Activated B cell treated with CpG ODN at 0.5 μM for 24 hours (primary cell): ENCODE measurements at regions of chr7 and their contacts with region 1.

Region 1: DNA sequence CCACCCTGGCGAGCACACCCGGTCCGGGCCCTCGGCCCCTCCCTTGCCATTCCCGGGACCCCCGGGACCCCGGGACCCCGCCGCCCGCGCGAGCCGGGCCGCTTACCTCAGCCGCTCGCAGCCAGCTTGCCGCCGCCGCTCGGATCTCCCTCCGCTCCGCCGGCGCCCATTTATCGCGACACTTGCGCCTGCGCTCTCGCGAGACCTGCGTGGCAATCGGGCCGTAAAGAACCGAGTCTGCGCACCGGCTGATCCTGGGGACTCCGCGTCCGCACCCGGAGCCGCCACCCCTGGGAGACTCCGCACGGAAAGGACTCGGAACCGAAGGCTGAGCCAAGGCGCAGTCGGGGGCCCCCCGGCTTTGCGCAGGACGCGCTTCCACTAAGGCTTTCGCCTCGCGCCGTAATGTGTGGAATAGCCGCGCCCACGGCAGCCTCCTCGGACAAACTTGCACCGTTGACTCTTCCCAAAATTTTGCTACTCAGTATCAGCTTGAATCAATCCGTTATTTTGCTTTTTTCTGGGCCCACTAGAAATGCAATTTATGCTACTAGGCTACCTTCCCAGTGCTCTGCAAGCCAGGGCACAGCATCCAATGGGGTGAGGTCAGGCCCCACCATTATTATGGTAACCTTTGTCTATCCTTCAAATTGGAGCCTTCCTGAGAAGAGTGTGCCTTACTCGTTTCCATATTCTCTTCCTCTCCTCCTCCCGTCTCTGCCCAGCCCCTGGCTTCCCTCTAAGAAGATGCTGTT is at the start of gene MAD1L1:
- DNase-seq: peak; percentile 88
- ATAC-seq: peak; percentile 68
- H3K4me3 Mint-ChIP-seq: peak within 1 kb of the TSS; percentile 90
- H3K27ac Mint-ChIP-seq: peak within 1 kb of the TSS; percentile 81
- H3K4me1 Mint-ChIP-seq: peaks cover 61% of the 10 kb centered on the region
- H3K27me3 Mint-ChIP-seq: no peaks in the 10 kb centered on the region
- CTCF ChIP-seq: no peak
- total RNA-seq, gene MAD1L1: 54.6 and 65.7 TPM in 2 replicates

Region 2: DNA sequence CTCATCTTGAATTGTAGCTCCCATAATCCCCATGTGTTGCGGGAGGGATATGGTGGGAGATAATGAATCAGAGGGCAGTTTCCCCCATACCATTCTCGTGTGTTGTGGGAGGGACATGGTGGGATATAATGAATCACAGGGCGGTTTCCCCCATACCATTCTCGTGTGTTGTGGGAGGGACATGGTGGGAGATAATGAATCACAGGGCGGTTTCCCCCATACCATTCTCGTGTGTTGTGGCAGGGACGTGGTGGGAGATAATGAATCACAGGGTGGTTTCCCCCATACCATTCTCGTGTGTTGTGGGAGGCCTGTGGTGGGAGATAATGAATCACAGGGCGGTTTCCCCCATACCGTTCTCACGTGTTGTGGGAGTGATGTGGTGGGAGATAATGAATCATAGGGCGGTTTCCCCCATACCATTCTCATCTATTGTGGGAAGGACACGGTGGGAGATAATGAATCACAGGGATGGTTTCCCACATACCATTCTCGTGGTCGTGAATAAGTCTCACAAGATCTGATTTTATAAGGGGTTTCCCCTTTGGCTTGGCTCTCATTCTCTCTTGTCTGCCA is 271.2 kb before region 1 on chr7:
- CTCF ChIA-PET with region 1: no interaction called
- POLR2A ChIA-PET with region 1: no interaction called
- intact Hi-C with region 1: no loop called
- DNase-seq: no peak
- ATAC-seq: peak; percentile 14
- H3K4me3 Mint-ChIP-seq: no peak overlapping the region
- H3K27ac Mint-ChIP-seq: peak overlapping the region; percentile 71
- H3K4me1 Mint-ChIP-seq: peaks cover 2% of the 10 kb centered on the region
- H3K27me3 Mint-ChIP-seq: no peaks in the 10 kb centered on the region
- CTCF ChIP-seq: no peak

Region 3: DNA sequence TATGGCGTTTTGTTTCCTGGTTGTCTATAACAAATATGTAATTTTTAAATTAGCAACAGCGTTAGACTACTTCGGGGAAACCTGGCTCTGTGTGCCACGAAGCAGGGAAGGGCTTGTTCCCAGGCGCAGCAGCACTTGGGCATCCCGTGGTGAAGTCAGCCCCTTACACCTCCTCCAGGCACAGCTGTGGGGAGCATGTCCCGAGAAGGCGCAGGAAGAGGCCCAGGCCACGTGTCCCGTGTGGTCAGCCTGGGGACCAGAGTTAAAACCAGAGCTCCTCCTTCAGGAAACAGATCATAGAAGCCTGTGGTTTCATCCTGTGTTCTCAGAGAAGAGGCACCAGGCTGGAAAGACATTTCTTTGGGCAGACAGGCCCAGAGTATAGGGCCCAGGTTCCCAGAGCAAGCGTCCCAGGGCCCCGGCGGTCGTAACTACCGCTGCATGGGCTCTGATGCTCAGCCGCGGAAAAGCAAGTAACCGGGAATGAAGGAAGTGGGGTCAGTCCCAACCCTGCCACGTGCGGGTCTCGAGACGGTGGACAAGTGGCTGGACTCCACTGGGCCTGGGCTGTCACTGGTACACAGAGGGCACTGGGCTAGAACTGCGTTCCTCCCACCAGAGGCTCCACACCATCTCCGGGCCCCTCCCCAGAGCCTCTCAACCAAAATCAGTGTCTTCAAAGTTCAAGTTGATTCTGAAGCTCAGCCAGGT is 16.2 kb after region 1 on chr7:
- CTCF ChIA-PET with region 1: no interaction called
- POLR2A ChIA-PET with region 1: interaction called, 10 read pairs
- intact Hi-C with region 1: no loop called
- DNase-seq: no peak
- ATAC-seq: peak; percentile 25
- H3K4me3 Mint-ChIP-seq: peak overlapping the region; percentile 7
- H3K27ac Mint-ChIP-seq: peak overlapping the region; percentile 76
- H3K4me1 Mint-ChIP-seq: peaks cover 53% of the 10 kb centered on the region
- H3K27me3 Mint-ChIP-seq: no peaks in the 10 kb centered on the region
- CTCF ChIP-seq: no peak

Region 4: GRCh38 chr7:2299131-2299829 is 66.3 kb after region 1 on chr7:
- CTCF ChIA-PET with region 1: no interaction called
- POLR2A ChIA-PET with region 1: interaction called, 7 read pairs
- intact Hi-C with region 1: loop called (anchors 2 kb)
- DNase-seq: peak; percentile 49
- ATAC-seq: peak; percentile 72
- H3K4me3 Mint-ChIP-seq: peak overlapping the region; percentile 77
- H3K27ac Mint-ChIP-seq: peak overlapping the region; percentile 96
- H3K4me1 Mint-ChIP-seq: peaks cover 76% of the 10 kb centered on the region
- H3K27me3 Mint-ChIP-seq: no peaks in the 10 kb centered on the region
- CTCF ChIP-seq: no peak

Region 5: GRCh38 chr7:2403014-2403717 is 170.2 kb after region 1 on chr7 and contains the start of gene CHST12:
- CTCF ChIA-PET with region 1: no interaction called
- POLR2A ChIA-PET with region 1: interaction called, 3 read pairs
- intact Hi-C with region 1: loop called (anchors 1 kb)
- DNase-seq: peak; percentile 91
- ATAC-seq: peak; percentile 77
- H3K4me3 Mint-ChIP-seq: peak within 1 kb of the TSS; percentile 85
- H3K27ac Mint-ChIP-seq: peak within 1 kb of the TSS; percentile 93
- H3K4me1 Mint-ChIP-seq: peaks cover 47% of the 10 kb centered on the region
- H3K27me3 Mint-ChIP-seq: no peaks in the 10 kb centered on the region
- CTCF ChIP-seq: no peak
- total RNA-seq, gene CHST12: 10.3 and 14.4 TPM in 2 replicates

Region 6: DNA sequence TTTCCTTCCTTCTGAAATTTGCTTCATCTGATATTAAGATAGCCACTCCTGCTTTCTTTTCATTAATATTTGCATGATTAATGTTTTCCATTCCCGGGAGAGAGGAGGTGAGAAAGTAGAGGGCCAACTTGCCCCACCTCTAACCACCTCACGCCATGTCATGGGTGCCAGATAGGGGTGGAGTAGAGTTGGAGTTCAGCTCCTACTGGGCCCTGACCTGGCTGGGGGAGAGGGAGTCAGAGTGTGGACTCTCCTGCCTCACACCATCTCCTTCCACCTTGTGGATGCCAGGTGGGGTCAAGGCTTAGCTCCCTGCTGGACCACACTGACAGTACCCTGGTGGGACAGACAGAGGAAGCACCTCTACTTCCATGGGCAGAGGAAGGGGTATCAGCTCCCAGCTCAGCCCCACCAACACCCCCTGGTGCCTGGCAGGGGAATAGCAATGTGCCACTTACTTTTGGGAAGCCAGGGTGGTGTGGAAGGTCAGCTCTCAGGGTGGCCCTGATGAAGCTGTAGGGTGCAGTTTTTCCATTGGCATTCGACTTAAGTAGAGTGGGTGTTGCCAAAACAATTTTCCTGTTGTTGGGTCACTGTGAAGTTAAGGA is 198.4 kb after region 1 on chr7:
- CTCF ChIA-PET with region 1: no interaction called
- POLR2A ChIA-PET with region 1: no interaction called
- intact Hi-C with region 1: no loop called
- DNase-seq: no peak
- ATAC-seq: peak; percentile 37
- H3K4me3 Mint-ChIP-seq: no peak overlapping the region
- H3K27ac Mint-ChIP-seq: no peak overlapping the region
- H3K4me1 Mint-ChIP-seq: no peaks in the 10 kb centered on the region
- H3K27me3 Mint-ChIP-seq: no peaks in the 10 kb centered on the region
- CTCF ChIP-seq: no peak

Region 7: DNA sequence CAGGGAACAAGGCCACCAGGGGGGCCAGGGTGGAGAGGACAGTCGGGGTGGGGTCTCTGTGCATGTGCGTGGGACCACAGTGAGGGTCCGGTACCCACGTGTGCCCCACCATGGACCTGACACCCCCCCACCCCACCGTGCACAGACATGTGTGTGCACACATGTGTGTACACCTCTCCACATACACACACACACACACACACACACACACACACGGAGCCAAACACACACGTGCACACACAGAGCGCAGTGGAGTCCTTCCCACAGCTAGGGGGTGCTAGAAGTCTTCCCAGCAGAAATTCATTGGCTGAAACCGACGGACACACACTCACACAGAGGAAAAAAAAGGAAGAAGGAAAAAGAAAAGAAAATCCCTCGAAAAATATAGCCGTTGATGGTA is 654.0 kb after region 1 on chr7:
- CTCF ChIA-PET with region 1: no interaction called
- POLR2A ChIA-PET with region 1: no interaction called
- intact Hi-C with region 1: no loop called
- DNase-seq: no peak
- ATAC-seq: peak; percentile 88
- H3K4me3 Mint-ChIP-seq: no peak overlapping the region
- H3K27ac Mint-ChIP-seq: no peak overlapping the region
- H3K4me1 Mint-ChIP-seq: peaks cover 7% of the 10 kb centered on the region
- H3K27me3 Mint-ChIP-seq: no peaks in the 10 kb centered on the region
- CTCF ChIP-seq: no peak